CD14-positive monocyte (primary cell): ENCODE measurements at regions of chr17 and their contacts with region 1.

Region 1: GRCh38 chr17:60315650-60316049 is 76.3 kb downstream of the USP32 start:
- DNase-seq: no peak
- H3K4me3 ChIP-seq: no peak overlapping the region
- H3K4me3 Mint-ChIP-seq: no peak overlapping the region
- H3K27ac ChIP-seq: peak overlapping the region in 1 of 2 donors; percentile 65
- H3K27ac Mint-ChIP-seq: peak overlapping the region in 1 of 7 donors; percentile 4
- H3K4me1 ChIP-seq: peaks cover 0 to 6% of the 10 kb centered on the region in 2 donors
- H3K4me1 Mint-ChIP-seq: peaks cover 22% of the 10 kb centered on the region
- H3K27me3 ChIP-seq: no peaks in the 10 kb centered on the region
- H3K27me3 Mint-ChIP-seq: peaks cover 0 to 2% (median 0%) of the 10 kb centered on the region in 3 donors
- CTCF ChIP-seq: peak; percentile 20

Region 2: GRCh38 chr17:60354223-60354622 is 38.6 kb after region 1 on chr17:
- intact Hi-C with region 1: no loop called
- DNase-seq: no peak
- H3K4me3 ChIP-seq: no peak overlapping the region
- H3K4me3 Mint-ChIP-seq: no peak overlapping the region
- H3K27ac ChIP-seq: peak overlapping the region in 1 of 2 donors; percentile 41
- H3K27ac Mint-ChIP-seq: peak overlapping the region in 3 of 7 donors; percentile 5 to 70 (median 10)
- H3K4me1 ChIP-seq: peaks cover 26 to 49% of the 10 kb centered on the region in 2 donors
- H3K4me1 Mint-ChIP-seq: peaks cover 46% of the 10 kb centered on the region
- H3K27me3 ChIP-seq: no peaks in the 10 kb centered on the region
- H3K27me3 Mint-ChIP-seq: no peaks in the 10 kb centered on the region
- CTCF ChIP-seq: no peak

Region 3: GRCh38 chr17:60372790-60373483 is 57.3 kb after region 1 on chr17:
- intact Hi-C with region 1: loop called in 1 of 2 experiments (anchors 10 kb)
- DNase-seq: peak in 2 of 3 donors; percentile 53 to 62
- H3K4me3 ChIP-seq: peak overlapping the region in 1 of 3 experiments; percentile 71
- H3K4me3 Mint-ChIP-seq: no peak overlapping the region
- H3K27ac ChIP-seq: peak overlapping the region; percentile 52 to 58
- H3K27ac Mint-ChIP-seq: peak overlapping the region; percentile 47 to 91 (median 80)
- H3K4me1 ChIP-seq: peaks cover 34 to 43% of the 10 kb centered on the region in 2 donors
- H3K4me1 Mint-ChIP-seq: peaks cover 44% of the 10 kb centered on the region
- H3K27me3 ChIP-seq: no peaks in the 10 kb centered on the region
- H3K27me3 Mint-ChIP-seq: peaks cover 0 to 2% (median 0%) of the 10 kb centered on the region in 3 donors
- CTCF ChIP-seq: no peak